Right ventricle myocardium inferior (tissue), 1 donor: ENCODE measurements at regions of chr20 and their contacts with region 1.

Region 1: DNA sequence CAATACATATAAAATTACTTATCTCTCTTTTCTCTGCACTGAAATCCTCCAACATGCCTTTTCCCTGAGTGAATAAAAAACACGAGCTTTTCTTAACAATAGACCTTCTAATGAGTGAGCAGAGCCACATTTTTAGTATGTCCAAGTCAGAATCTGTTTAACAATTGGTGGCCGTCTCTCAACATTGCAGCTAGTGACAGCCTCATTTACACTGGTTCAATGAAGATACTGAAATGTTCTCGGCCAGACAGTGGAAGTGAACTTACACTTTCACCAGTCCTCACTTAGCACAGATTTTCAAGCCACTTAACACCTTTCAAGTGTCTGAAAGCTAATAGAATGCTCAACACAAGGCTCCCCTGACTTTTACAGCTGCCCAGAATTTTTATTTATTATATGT is 767.1 kb downstream of the KIF16B start:
- DNase-seq: no peak
- ATAC-seq: no peak

Region 2: DNA sequence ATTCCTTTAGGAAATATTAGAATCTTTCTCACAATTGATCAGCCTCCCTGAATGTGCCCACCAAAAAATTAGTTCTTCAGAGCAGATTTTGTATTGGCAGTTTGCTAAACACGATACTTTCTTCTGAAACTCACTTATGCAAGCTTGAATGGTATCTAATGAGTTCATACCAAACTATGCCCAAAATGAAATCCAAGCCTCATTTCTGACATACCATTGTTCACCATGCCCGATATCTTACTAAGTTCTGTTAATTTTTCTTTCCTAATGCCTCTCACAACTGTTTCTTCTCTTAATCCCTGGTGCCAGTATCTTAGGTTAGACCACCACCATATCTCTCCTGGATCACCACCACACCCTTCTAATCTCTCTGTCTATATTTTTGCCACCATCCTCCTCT is 11.2 kb after region 1 on chr20:
- intact Hi-C with region 1: loop called (anchors 1 kb)
- DNase-seq: no peak
- ATAC-seq: no peak